Activated T-helper 2 cell treated with anti-CD3 and anti-CD28 coated beads, Interferon-gamma antibody, Interleukin-2, Interleukin-4, amounts not matched to agents 10 μg/mL and 5 μg/mL and 100 μg/mL, durations not matched to agents 14 hours and 24 hours and 36 hours (primary cell): ENCODE measurements at regions of chr19 and their contacts with region 1.

Region 1: DNA sequence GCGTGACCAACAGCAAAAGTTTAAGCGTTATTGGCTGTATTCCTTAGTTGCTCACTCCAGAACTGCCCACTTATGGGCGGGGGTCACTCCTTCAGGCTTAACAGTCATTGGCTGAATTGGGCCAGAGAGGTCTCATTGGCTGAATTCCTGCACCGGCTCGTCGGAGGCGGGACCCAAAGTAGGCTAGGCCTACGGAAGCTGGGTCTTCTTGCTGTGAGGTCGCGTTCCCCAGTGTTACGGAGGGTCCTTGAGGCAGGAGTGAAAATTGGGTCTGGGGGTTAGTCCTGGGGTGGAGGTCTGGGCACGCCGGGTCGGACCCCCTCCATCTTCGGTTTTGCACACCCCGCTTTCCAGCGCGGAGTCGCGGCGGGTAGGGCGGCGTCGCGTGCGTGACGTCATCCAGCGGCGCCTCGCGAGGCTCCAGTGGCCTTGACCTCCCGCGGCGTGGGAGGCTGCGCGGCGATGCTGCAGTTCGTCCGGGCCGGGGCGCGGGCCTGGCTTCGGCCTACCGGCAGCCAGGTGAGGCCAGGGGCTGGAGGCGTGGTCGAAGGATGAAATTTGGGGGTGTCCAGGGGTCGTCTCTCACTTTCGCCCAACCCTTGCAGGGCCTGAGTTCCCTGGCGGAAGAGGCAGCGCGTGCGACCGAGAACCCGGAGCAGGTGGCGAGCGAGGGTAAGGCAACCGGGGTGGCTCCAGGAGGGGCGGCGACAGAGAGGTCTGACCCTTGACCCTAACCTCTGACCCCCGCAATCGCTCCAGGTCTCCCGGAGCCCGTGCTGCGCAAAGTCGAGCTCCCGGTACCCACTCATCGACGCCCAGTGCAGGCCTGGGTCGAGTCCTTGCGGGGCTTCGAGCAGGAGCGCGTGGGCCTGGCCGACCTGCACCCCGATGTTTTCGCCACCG is at the start of gene MRPL4:
- DNase-seq: peak; percentile 97
- H3K4me3 Mint-ChIP-seq: peak within 1 kb of the TSS; percentile 95
- H3K27ac Mint-ChIP-seq: peak within 1 kb of the TSS; percentile 94
- H3K4me1 Mint-ChIP-seq: peaks cover 2% of the 10 kb centered on the region
- H3K27me3 Mint-ChIP-seq: no peaks in the 10 kb centered on the region
- total RNA-seq, gene MRPL4: 133 and 135 TPM in 2 replicates

Region 2: DNA sequence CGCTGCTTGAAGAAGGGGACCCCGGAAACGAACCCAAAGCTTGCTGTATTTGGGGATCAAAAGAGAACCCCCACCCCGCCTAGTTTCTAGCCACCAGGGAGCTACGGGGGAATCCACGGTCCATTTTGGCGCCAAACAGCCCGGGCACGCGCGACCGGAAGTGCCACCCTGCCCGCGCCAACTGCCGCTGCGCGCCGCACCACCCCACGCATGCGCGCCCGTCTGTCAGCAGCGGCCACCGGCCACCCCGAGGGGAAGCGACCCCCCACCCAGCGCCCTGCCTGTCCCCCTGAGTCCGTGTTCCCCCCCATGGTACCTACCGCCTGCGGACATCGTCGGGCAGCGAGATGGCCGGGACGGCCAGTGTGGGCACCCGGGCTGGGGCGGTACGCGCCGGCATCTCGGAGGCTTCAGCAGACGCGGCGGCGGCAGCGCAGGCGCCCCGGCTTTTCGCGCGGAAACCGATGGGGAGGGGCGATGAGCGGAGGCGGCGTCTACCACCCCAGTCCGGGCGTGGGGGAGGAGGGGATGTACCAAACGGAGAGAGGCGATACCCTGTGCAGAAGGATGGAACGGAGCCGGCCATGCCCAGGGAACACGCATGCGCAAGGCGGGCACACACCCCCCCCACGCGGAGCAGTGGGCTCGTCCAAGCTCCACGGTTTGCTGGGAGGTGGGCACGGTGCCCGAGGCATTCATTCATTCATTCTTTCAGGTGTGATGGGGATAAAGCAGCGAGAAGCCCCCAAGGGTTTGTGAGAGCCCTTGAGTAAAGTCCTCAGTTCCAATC is 57.3 kb before region 1 on chr19 and contains the start of gene DNMT1:
- intact Hi-C with region 1: loop called (anchors 1 kb)
- DNase-seq: peak; percentile 98
- H3K4me3 Mint-ChIP-seq: peak within 1 kb of the TSS; percentile 97
- H3K27ac Mint-ChIP-seq: peak within 1 kb of the TSS; percentile 96
- H3K4me1 Mint-ChIP-seq: peaks cover 29% of the 10 kb centered on the region
- H3K27me3 Mint-ChIP-seq: no peaks in the 10 kb centered on the region
- total RNA-seq, gene DNMT1: 367 and 370 TPM in 2 replicates

Region 3: GRCh38 chr19:10230861-10231611 is 21.0 kb before region 1 on chr19 and contains the start of gene S1PR2:
- intact Hi-C with region 1: loop called (anchors 1 kb)
- DNase-seq: peak; percentile 51
- H3K4me3 Mint-ChIP-seq: peak within 1 kb of the TSS; percentile 83
- H3K27ac Mint-ChIP-seq: peak within 1 kb of the TSS; percentile 62
- H3K4me1 Mint-ChIP-seq: peaks cover 16% of the 10 kb centered on the region
- H3K27me3 Mint-ChIP-seq: no peaks in the 10 kb centered on the region
- total RNA-seq, gene S1PR2: 10.1 and 10.8 TPM in 2 replicates